ENCODE measurements at regions of chr4 and their contacts with region 1.

Region 1: DNA sequence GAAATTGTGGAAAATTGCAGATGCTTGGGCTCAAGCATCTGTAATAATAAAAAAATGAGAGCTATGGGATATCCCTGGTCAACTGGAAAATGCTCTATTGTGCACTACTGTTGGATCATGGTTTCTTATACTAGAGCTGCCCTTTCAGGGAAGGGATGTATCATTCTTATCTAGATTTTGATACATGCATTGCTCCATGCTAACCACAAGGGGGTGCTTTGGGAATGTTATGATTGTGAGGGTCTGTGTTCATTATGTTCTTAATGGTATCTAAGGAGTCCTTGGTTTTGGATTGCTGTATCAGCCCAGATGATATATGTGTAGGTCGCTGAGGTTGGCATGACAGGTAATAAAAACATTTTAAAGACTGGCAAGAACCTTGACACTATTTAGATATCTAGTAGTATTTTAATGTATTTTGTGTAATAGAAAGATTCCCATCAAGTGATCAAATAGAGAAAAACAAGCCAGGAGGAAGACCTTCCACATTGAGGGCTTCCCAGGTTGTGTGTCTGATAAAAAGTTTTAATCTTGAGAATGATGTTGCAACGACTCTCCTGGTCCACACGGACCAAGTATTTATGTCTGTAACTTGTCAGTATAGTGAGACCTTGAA is 49.2 kb upstream of the TLR2 start:
- DNase-seq: no peak
- H3K4me3 ChIP-seq: no peak overlapping the region
- H3K27ac ChIP-seq: no peak overlapping the region
- H3K4me1 ChIP-seq: no peaks in the 10 kb centered on the region
- H3K27me3 ChIP-seq: no peaks in the 10 kb centered on the region
- CTCF ChIP-seq: peak in 3 of 4 experiments; percentile 29 to 64 (median 50)
- EP300 ChIP-seq: no peak
- POLR2A ChIP-seq: no peak

Region 2: GRCh38 chr4:153585026-153585425 is 49.8 kb before region 1 on chr4:
- intact Hi-C with region 1: no loop called
- DNase-seq: no peak
- H3K4me3 ChIP-seq: no peak overlapping the region
- H3K27ac ChIP-seq: peak overlapping the region in 1 of 4 donors; percentile 30
- H3K4me1 ChIP-seq: peaks cover 0 to 10% (median under 1%) of the 10 kb centered on the region in 4 donors
- H3K27me3 ChIP-seq: no peaks in the 10 kb centered on the region
- CTCF ChIP-seq: no peak
- EP300 ChIP-seq: no peak
- POLR2A ChIP-seq: no peak

Region 3: DNA sequence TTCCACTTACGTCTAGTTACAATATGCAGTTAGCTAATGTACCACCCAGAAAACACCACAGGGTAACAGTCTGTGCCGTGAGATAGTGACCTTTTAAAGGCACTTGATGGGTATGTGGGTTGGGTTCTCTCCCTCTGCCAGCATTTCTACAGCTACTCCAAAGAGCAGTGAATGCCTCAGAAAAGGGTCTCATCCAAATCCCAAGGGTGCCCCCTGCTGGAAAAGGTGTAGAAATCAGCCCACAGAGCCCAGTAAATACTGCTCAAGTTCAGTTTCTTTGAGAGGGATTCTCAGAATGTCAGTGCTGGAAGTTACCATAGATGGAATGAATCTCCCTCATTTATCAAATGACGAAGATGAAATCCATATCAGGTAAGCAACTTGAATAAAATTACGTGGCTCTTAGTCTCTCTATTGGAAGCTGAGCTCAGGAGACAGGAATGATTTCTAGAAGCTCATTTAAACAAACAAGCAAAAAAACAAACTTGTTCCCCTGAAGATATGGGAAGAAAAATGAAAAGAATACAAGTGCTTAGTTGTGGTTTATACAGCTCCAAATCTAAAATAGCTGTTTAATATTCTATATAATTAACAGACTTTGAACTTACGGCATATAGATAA is 115.5 kb after region 1 on chr4:
- intact Hi-C with region 1: loop called (anchors 5 kb)
- DNase-seq: peak; percentile 72
- H3K4me3 ChIP-seq: no peak overlapping the region
- H3K27ac ChIP-seq: no peak overlapping the region
- H3K4me1 ChIP-seq: peaks cover 0 to 6% (median 0%) of the 10 kb centered on the region in 4 donors
- H3K27me3 ChIP-seq: no peaks in the 10 kb centered on the region
- CTCF ChIP-seq: peak in 3 of 4 experiments; percentile 26 to 51 (median 33)
- EP300 ChIP-seq: no peak
- POLR2A ChIP-seq: no peak